Activated CD4-positive, alpha-beta T cell treated with anti-CD3 and anti-CD28 coated beads, Interleukin-2, amount 10 ng/mL, durations not matched to agents 24 days and 14 days (primary cell): ENCODE measurements at regions of chr19 and their contacts with region 1.

Region 1: DNA sequence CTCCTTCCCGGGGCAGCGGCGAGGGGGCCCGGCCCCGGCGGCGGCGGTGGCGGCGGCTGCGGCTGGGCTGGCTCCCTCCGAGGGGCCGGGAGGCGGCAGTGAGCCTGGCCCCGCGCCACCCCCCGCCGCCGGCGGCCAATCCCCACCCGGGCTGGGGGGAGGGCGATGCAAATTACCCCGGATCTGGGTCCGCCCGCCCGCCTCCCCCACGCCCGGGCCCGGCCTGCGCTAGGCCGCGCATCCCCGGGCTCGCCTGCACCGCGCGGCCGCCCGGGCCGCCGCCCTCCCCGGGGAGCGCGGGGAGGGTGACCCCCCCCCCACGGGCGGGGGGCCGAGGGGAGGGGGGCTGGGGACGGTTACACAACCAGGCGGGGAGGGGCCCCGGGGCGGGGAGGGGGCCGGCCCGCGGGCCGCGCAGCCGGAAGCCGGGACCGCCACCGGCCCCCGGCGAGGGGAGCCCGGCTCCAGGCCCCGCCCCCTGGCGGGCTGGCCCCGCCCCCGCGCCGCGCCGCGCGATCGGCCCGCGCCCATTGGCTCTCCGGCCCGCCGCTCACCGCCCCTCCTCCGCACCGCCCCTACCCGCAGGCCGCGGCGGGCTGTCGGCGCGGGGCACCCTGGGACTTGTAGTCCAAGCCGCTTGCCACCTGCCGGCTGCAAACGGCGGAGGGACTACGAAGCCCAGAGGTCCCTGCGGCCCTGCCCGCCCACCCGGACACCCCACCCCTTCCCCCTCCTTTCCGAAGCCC is 1.1 kb downstream of the ZBTB7A start:
- DNase-seq: peak; percentile 99
- H3K4me3 Mint-ChIP-seq: peak overlapping the region; percentile 69
- H3K27ac Mint-ChIP-seq: no peak overlapping the region
- H3K4me1 Mint-ChIP-seq: peaks cover 25% of the 10 kb centered on the region
- H3K27me3 Mint-ChIP-seq: no peaks in the 10 kb centered on the region

Region 2: GRCh38 chr19:4007021-4007835 is 58.4 kb before region 1 on chr19 and contains the start of gene PIAS4:
- intact Hi-C with region 1: loop called (anchors 2 kb)
- DNase-seq: peak; percentile 98
- H3K4me3 Mint-ChIP-seq: peak within 1 kb of the TSS; percentile 90
- H3K27ac Mint-ChIP-seq: peak within 1 kb of the TSS; percentile 90
- H3K4me1 Mint-ChIP-seq: peaks cover 16% of the 10 kb centered on the region
- H3K27me3 Mint-ChIP-seq: no peaks in the 10 kb centered on the region
- total RNA-seq, gene PIAS4: 32.2 and 33.2 TPM in 2 replicates

Region 3: DNA sequence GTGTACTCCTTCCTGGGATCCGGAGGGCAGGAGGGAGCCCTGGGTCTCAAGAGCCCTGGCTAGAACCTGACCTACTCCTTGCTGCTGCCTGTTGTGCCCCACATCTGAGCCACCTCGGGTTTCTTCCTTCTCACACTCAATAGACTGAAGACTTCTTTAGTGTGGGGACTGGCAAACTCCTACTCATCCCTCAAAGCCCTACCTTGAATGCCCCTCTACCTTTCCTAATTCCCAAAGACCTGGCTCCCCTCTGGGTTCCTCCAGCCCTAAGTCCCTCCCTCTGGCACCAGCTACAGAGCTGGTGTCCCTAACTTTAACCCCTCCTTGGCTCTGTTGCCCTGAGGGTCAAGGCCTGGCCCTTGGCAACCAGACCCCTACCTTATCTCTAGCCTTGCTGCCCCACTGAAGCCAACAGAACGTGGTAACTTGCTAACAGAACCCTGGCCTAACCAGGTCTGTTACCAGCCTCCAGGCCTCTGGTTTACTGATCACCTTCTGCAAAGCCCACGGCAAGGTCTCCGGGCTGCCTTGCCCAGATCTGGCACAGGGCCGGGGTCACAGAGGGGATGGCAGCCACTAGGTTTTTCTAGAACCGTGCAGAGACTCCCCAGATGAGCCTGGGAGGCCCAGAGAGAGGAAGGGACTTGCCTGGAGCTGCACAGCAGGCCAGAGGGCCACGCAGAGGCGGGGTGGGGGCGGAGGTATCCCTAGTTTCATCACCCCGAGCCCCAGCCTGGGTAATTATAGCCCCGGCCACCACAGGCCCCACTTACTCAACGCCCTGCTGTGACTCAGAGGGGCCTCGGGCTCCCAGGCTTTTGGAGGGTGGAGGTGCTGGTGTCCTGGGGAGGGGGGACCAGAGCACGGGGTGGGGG is 14.2 kb before region 1 on chr19:
- intact Hi-C with region 1: no loop called
- DNase-seq: no peak
- H3K4me3 Mint-ChIP-seq: no peak overlapping the region
- H3K27ac Mint-ChIP-seq: peak overlapping the region; percentile 59
- H3K4me1 Mint-ChIP-seq: peaks cover 20% of the 10 kb centered on the region
- H3K27me3 Mint-ChIP-seq: no peaks in the 10 kb centered on the region

Region 4: GRCh38 chr19:4077882-4078614 is 12.4 kb after region 1 on chr19:
- intact Hi-C with region 1: loop called (anchors 1 kb)
- DNase-seq: peak; percentile 88
- H3K4me3 Mint-ChIP-seq: peak overlapping the region; percentile 76
- H3K27ac Mint-ChIP-seq: peak overlapping the region; percentile 87
- H3K4me1 Mint-ChIP-seq: peaks cover 39% of the 10 kb centered on the region
- H3K27me3 Mint-ChIP-seq: no peaks in the 10 kb centered on the region

Region 5: GRCh38 chr19:4089400-4089908 is 23.9 kb after region 1 on chr19:
- intact Hi-C with region 1: loop called (anchors 2 kb)
- DNase-seq: peak; percentile 92
- H3K4me3 Mint-ChIP-seq: peak overlapping the region; percentile 86
- H3K27ac Mint-ChIP-seq: peak overlapping the region; percentile 97
- H3K4me1 Mint-ChIP-seq: peaks cover 36% of the 10 kb centered on the region
- H3K27me3 Mint-ChIP-seq: no peaks in the 10 kb centered on the region

Region 6: GRCh38 chr19:4103073-4103418 is 37.4 kb after region 1 on chr19:
- intact Hi-C with region 1: loop called (anchors 5 kb)
- DNase-seq: peak; percentile 67
- H3K4me3 Mint-ChIP-seq: no peak overlapping the region
- H3K27ac Mint-ChIP-seq: peak overlapping the region; percentile 77
- H3K4me1 Mint-ChIP-seq: peaks cover 27% of the 10 kb centered on the region
- H3K27me3 Mint-ChIP-seq: no peaks in the 10 kb centered on the region

Region 7: DNA sequence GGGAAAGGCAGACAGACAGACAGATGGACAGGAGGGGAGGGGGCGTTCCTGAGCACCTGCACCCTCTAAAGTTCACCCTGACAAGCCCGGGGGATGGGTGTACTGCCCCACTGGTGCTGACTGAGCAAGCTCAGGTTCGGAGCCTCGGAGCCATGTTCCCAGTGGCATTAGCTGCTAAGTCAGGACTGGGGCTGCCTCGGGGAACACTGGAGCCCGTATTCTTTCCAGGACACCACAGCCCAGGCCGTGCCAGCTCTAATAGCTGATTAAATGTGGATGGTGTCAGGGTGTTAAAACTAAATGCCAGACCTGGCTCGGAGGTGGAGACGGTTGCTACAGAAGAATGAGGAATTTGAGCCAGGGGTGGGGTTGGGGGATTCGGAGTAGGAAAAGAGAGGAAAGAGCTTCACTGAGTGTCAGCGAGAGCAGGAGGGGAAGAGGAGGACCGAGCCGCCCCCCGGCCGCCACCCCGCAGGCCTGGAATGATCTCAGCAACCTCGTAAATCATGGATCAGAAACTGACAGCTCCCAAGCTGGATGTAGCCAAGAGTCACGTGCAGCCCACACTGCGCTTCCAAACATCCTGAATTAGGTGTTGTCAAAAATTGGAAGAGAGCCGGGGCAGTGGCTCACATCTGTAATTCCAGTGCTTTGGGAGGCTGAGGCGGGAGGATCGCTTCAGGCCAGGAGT is 47.9 kb after region 1 on chr19:
- intact Hi-C with region 1: no loop called
- DNase-seq: no peak
- H3K4me3 Mint-ChIP-seq: no peak overlapping the region
- H3K27ac Mint-ChIP-seq: peak overlapping the region; percentile 14
- H3K4me1 Mint-ChIP-seq: peaks cover 32% of the 10 kb centered on the region
- H3K27me3 Mint-ChIP-seq: no peaks in the 10 kb centered on the region

Region 8: GRCh38 chr19:4123615-4124568 is 58.3 kb after region 1 on chr19 and contains the start of gene MAP2K2:
- intact Hi-C with region 1: loop called (anchors 5 kb)
- DNase-seq: peak; percentile 99
- H3K4me3 Mint-ChIP-seq: peak within 1 kb of the TSS; percentile 99
- H3K27ac Mint-ChIP-seq: peak within 1 kb of the TSS; percentile 95
- H3K4me1 Mint-ChIP-seq: peaks cover 22% of the 10 kb centered on the region
- H3K27me3 Mint-ChIP-seq: no peaks in the 10 kb centered on the region
- total RNA-seq, gene MAP2K2: 125 and 135 TPM in 2 replicates